ENCODE measurements at regions of chr3 and their contacts with region 1.

Region 1: DNA sequence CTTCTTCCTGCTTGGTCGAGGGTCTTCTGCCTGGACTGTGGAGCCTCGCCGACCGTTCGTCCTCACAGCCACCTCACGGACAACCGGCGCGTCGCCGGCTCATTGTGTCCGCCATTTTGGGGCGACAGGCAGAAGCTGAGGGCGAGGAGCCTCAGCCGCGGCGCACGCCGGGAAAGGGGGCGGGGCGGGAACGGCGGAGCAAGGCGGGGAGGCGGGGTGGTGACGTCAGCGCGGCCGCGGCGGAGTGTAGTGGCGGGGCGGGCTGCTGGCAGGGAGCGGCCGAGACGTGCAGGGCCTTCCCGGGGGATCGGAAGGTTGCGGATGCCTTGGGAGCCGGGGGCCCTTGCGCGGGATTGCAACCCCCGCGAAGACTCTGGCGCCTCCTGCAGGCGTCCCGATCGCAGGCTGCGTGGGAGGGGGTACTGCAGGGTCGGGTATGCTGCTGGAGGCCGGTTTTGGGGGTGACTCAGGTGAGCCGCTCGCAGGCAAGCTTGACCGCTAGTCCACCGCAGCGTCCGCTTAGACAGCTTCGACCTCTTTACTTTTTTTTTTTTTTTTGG is at the start of gene WDR82:
- DNase-seq: peak; percentile 93 to 96 (median 95)
- H3K4me3 ChIP-seq: peak within 1 kb of the TSS; percentile 83 to 97 (median 94)
- H3K27ac ChIP-seq: peak within 1 kb of the TSS; percentile 86 to 90
- H3K4me1 ChIP-seq: peaks cover 30 to 62% (median 47%) of the 10 kb centered on the region in 4 experiments
- H3K27me3 ChIP-seq: no peaks in the 10 kb centered on the region

Region 2: DNA sequence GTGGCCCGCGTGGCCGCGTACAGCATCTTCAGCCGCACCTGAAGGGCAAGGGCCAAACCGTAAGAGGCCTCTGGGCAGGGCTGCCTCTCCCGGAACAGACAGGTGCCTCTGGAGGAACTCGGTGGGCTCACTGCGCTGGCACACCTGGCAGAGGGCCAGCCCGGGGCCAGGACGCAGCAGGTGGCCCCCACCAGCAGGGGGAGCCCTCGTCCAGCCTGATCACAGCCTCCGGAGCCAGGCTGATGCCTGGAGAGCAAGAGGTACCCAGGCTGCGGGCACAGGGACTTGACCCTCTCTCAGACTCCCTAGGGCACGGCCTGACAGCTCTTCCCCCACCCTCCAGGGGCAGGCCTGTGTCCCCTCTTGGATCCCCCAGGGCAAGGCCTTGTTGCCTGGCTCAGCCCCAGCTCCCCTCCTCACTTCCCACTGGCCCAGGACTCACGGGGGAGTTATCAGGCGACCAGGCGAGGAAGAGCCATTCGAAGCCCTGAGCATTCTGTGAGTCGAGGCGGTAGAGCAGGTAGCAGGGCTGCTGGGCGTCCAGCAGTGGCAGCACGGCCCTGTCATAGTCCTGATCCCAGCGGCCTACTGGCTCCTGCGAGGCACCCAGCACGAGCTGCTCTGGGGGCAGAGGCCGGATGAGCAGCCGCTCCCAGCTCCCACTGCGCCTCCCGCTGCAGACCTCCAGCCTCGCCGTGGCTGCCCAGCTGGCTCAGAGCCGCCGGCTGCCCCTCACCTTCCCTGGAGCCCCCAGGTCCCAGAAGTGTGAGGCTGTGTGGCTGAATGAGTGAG is 46.9 kb before region 1 on chr3:
- CTCF ChIA-PET with region 1: interaction called, 74 read pairs
- POLR2A ChIA-PET with region 1: no interaction called
- DNase-seq: peak; percentile 77 to 87 (median 80)
- H3K4me3 ChIP-seq: peak overlapping the region in 1 of 7 experiments; percentile 8
- H3K27ac ChIP-seq: no peak overlapping the region
- H3K4me1 ChIP-seq: peaks cover 0 to 19% (median 13%) of the 10 kb centered on the region in 4 experiments
- H3K27me3 ChIP-seq: no peaks in the 10 kb centered on the region

Region 3: GRCh38 chr3:52245322-52246263 is 33.0 kb before region 1 on chr3 and contains the start of gene PPM1M:
- CTCF ChIA-PET with region 1: interaction called, 19 read pairs
- POLR2A ChIA-PET with region 1: interaction called, 6 read pairs
- DNase-seq: peak; percentile 77 to 90 (median 85)
- H3K4me3 ChIP-seq: peak within 1 kb of the TSS; percentile 19 to 74 (median 49)
- H3K27ac ChIP-seq: peak within 1 kb of the TSS in 1 of 2 experiments; percentile 9
- H3K4me1 ChIP-seq: peaks cover 0 to 43% (median 35%) of the 10 kb centered on the region in 4 experiments
- H3K27me3 ChIP-seq: no peaks in the 10 kb centered on the region

Region 4: GRCh38 chr3:52259035-52259434 is 19.6 kb before region 1 on chr3:
- CTCF ChIA-PET with region 1: interaction called, 11 read pairs
- POLR2A ChIA-PET with region 1: interaction called, 5 read pairs
- DNase-seq: no peak
- H3K4me3 ChIP-seq: no peak overlapping the region
- H3K27ac ChIP-seq: peak overlapping the region in 1 of 2 experiments; percentile 29
- H3K4me1 ChIP-seq: peaks cover 0 to 25% (median 5%) of the 10 kb centered on the region in 4 experiments
- H3K27me3 ChIP-seq: no peaks in the 10 kb centered on the region

Region 5: DNA sequence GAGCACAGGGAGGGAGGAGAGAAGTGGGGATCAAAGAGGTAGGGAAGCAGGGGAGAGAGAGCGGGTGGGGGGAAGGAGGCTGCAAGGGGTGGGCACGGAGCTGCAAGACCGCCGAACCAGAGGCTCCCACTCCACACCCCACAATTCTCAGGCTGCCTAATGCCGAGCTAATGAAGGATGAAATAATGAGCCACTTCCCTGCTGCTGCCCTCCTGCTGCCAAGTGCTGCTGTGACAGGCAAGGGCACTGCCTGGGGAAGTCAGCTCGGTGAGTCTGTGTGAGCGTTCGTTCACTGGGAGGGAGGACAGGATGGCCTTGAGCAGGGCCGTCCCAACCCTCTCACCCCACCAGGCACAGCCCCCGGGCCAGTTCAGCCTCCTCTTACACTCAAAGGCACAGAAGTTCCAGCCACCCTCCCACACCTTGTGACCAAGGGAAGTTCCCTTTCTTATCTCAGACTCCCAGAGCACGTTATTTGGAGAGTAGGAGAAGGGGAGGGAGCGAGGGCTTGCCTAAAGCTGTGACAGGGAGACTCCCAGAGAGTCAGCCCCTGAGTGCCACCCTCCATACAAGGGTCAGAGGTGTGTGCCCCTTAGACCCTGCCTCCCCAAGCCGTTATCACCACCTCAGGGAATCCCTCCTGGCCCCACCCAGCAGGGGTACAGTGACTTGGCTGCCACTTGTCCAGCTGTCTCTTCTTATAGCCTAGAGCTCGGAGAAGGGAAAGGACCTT is 21.5 kb after region 1 on chr3:
- CTCF ChIA-PET with region 1: interaction called, 27 read pairs
- POLR2A ChIA-PET with region 1: interaction called, 4 read pairs
- DNase-seq: peak; percentile 84 to 95 (median 93)
- H3K4me3 ChIP-seq: peak overlapping the region in 4 of 7 experiments; percentile 12 to 52 (median 28)
- H3K27ac ChIP-seq: peak overlapping the region in 1 of 2 experiments; percentile 59
- H3K4me1 ChIP-seq: peaks cover 5 to 54% (median 47%) of the 10 kb centered on the region in 4 experiments
- H3K27me3 ChIP-seq: no peaks in the 10 kb centered on the region

Region 6: GRCh38 chr3:52533623-52534280 is 255.2 kb after region 1 on chr3 and contains the start of gene NT5DC2:
- CTCF ChIA-PET with region 1: no interaction called
- POLR2A ChIA-PET with region 1: no interaction called
- DNase-seq: peak; percentile 54 to 68 (median 62)
- H3K4me3 ChIP-seq: peak within 1 kb of the TSS; percentile 28 to 75 (median 68)
- H3K27ac ChIP-seq: no peak within 1 kb of the TSS
- H3K4me1 ChIP-seq: peaks cover 12 to 70% (median 51%) of the 10 kb centered on the region in 4 experiments
- H3K27me3 ChIP-seq: no peaks in the 10 kb centered on the region